ENCODE measurements at regions of chr17 and their contacts with region 1.

Region 1: DNA sequence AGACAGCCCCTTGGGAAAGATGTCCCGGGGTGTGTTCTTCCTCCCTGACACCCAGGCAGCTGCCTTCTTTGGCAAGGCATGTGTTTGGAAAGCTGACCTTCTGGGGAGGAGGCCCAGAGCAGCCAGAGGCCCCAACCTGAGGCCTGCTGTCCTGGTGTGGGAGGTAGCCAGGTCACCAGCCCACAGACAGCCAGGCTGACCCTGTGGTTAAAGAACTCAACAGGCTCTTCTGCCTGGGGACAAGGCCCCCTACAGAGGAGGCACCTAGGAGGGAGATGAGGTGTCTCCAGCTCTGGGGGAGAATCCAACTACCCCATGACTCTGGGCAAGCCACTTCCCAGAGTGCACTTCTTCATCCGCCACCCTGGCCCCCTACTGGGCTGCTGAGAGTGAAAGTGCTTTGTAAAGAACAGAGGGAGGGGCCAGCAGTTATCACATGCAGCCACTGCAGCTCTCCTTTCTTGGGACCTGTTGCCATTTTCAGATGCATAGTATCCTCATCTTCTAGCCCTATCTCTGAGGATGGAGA is 13.1 kb upstream of the SREBF1 start:
- DNase-seq: peak; percentile 32
- ATAC-seq: peak; percentile 90
- H3K4me3 ChIP-seq: no peak overlapping the region
- H3K27ac ChIP-seq: peak overlapping the region; percentile 59
- H3K4me1 ChIP-seq: peaks cover 27% of the 10 kb centered on the region
- H3K27me3 ChIP-seq: no peaks in the 10 kb centered on the region
- CTCF ChIP-seq: peak; percentile 13 to 38 (median 24); a peak in 2 of 6 replicates
- EP300 ChIP-seq: no peak
- POLR2A ChIP-seq: peak; percentile 63
- RAD21 ChIP-seq: no peak

Region 2: GRCh38 chr17:17812211-17813057 is 37.5 kb before region 1 on chr17:
- CTCF ChIA-PET with region 1: interaction called, 86 read pairs
- POLR2A ChIA-PET with region 1: no interaction called
- RAD21 ChIA-PET with region 1: interaction called, 3 read pairs
- SMC1A ChIA-PET with region 1: interaction called, 14 read pairs
- in situ Hi-C with region 1: no loop called
- intact Hi-C with region 1: no loop called
- DNase-seq: no peak
- ATAC-seq: peak; percentile 77
- H3K4me3 ChIP-seq: no peak overlapping the region
- H3K27ac ChIP-seq: no peak overlapping the region
- H3K4me1 ChIP-seq: peaks cover 8% of the 10 kb centered on the region
- H3K27me3 ChIP-seq: no peaks in the 10 kb centered on the region
- CTCF ChIP-seq: peak; percentile 97 to 99 (median 98); a peak in 5 of 6 replicates
- EP300 ChIP-seq: no peak
- POLR2A ChIP-seq: no peak
- RAD21 ChIP-seq: peak; percentile 74